ENCODE measurements at regions of chr14 and their contacts with region 1.

Region 1: GRCh38 chr14:102608064-102608446 is 15.6 kb downstream of the RCOR1 start:
- DNase-seq: no peak
- H3K4me3 Mint-ChIP-seq: no peak overlapping the region
- H3K27ac Mint-ChIP-seq: no peak overlapping the region
- H3K4me1 Mint-ChIP-seq: peaks cover 23% of the 10 kb centered on the region
- H3K27me3 Mint-ChIP-seq: no peaks in the 10 kb centered on the region

Region 2: GRCh38 chr14:102644523-102644922 is 36.5 kb after region 1 on chr14:
- intact Hi-C with region 1: loop called (anchors 5 kb)
- DNase-seq: no peak
- H3K4me3 Mint-ChIP-seq: no peak overlapping the region
- H3K27ac Mint-ChIP-seq: no peak overlapping the region
- H3K4me1 Mint-ChIP-seq: peaks cover 35% of the 10 kb centered on the region
- H3K27me3 Mint-ChIP-seq: no peaks in the 10 kb centered on the region